ENCODE measurements at regions of chr1 and their contacts with region 1.

Region 1: DNA sequence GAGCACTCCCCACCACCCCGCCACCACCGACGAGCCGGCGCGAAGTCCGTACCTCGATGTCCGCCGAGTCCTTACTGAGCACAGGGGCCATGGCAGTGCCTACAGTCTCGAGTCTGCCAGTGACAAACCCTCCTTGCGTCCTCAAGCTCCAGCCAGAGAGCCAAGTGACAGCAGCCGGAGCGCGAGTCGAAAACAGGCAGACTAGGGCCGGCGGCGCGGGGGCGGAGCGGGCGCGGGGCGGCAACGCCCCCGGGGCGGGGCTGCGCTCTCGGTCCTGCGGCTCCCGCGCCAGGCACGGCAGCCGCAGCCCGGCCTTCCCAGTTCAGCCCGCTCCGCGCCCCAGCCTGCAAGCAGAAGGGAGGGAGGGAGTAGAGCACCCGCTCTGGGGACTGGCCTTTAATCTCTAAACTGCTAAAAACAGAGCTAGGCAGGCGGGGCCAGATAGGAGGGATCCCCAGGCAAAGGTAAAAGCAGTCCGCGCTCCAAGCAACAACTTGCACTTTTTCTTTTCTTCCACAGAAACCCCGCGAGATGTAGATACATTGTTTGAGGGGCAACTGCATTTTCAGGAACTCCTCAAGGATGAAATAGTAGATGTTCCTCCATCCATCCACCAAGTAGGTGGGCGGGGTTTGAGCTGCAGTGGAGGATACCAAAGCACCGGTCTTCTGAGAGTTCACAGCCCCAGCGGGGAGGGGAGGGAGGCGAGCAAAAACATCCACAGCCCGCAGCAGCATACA is at the start of gene DPYD:
- DNase-seq: peak; percentile 88
- ATAC-seq: peak; percentile 90
- H3K4me3 ChIP-seq: peak within 1 kb of the TSS; percentile 84
- H3K27ac ChIP-seq: peak within 1 kb of the TSS; percentile 69
- H3K4me1 ChIP-seq: peaks cover 24% of the 10 kb centered on the region
- H3K27me3 ChIP-seq: no peaks in the 10 kb centered on the region
- CTCF ChIP-seq: no peak
- total RNA-seq, gene DPYD: 11.7 and 12.8 TPM in 2 replicates

Region 2: GRCh38 chr1:97668945-97669344 is 252.1 kb before region 1 on chr1:
- CTCF ChIA-PET with region 1: no interaction called
- POLR2A ChIA-PET with region 1: no interaction called
- intact Hi-C with region 1: loop called (anchors 5 kb)
- DNase-seq: peak; percentile 64
- ATAC-seq: peak; percentile 91
- H3K4me3 ChIP-seq: no peak overlapping the region
- H3K27ac ChIP-seq: no peak overlapping the region
- H3K4me1 ChIP-seq: peaks cover 7% of the 10 kb centered on the region; the same call in 1 of the 2 replicates
- H3K27me3 ChIP-seq: no peaks in the 10 kb centered on the region
- CTCF ChIP-seq: peak; percentile 76

Region 3: DNA sequence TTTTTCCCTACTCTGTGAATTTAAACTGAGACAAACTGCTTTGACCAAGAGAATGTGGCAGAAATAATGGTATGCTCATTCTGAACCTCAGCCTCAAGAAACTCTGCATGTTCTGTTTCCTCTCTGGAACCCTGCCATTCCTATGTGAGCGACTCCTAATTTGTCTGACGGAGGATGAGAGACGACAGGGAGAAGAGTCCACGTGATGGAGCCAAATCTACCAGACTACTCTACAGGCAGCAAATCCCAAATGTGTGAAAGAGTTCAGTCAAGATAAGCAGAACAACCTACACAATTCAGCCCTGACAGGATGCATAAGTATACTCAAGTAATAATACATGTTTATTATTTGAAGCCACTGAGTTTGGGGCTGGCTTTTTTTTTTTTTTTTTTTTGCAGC is 153.6 kb before region 1 on chr1:
- CTCF ChIA-PET with region 1: no interaction called
- POLR2A ChIA-PET with region 1: no interaction called
- intact Hi-C with region 1: no loop called
- DNase-seq: no peak
- ATAC-seq: no peak
- H3K4me3 ChIP-seq: no peak overlapping the region
- H3K27ac ChIP-seq: no peak overlapping the region
- H3K4me1 ChIP-seq: no peaks in the 10 kb centered on the region
- H3K27me3 ChIP-seq: no peaks in the 10 kb centered on the region
- CTCF ChIP-seq: no peak

Region 4: DNA sequence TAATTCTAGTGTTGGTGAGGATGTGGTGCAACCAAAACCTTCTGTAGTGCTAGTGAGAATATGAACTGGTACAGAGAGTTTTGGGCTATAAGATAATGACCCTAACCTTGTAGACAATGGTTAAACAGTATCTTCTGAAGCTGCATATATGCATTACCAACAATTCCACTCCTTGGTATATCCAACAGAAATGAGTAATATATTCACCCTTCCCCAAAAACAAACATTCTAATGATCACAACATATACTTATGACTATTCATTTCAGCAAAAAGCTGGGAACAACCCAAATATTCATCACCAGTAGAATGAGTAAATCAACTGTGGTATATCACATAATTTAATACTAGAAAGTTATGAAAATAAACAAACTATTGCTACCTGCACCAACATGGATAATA is 39.5 kb after region 1 on chr1:
- CTCF ChIA-PET with region 1: no interaction called
- POLR2A ChIA-PET with region 1: no interaction called
- intact Hi-C with region 1: loop called (anchors 2 kb)
- DNase-seq: peak; percentile 27
- ATAC-seq: peak; percentile 79
- H3K4me3 ChIP-seq: no peak overlapping the region
- H3K27ac ChIP-seq: no peak overlapping the region
- H3K4me1 ChIP-seq: peaks cover 4% of the 10 kb centered on the region
- H3K27me3 ChIP-seq: no peaks in the 10 kb centered on the region
- CTCF ChIP-seq: no peak

Region 5: DNA sequence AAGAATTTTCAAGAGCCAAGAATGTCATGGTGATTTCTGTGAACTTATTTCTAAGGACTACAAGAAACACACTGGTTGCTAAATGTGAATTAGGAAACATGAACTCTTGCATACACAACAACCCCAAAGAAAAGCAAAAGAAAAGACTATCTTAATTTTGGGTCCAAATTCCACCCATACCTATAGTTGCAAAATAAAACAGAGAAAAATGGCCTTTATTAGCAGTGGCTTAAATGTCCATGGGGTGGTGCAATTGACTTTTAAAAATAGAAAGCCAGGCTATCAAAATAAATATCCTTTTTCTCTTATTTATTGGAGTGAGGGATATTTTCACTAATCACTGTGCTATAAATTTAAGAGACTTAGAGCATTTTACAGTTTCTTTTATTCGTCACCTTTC is 80.8 kb after region 1 on chr1:
- CTCF ChIA-PET with region 1: no interaction called
- POLR2A ChIA-PET with region 1: no interaction called
- intact Hi-C with region 1: no loop called
- DNase-seq: peak; percentile 60
- ATAC-seq: peak; percentile 26; the same call in 1 of the 2 replicates
- H3K4me3 ChIP-seq: no peak overlapping the region
- H3K27ac ChIP-seq: no peak overlapping the region
- H3K4me1 ChIP-seq: peaks cover 45% of the 10 kb centered on the region
- H3K27me3 ChIP-seq: no peaks in the 10 kb centered on the region
- CTCF ChIP-seq: peak; percentile 75

Region 6: DNA sequence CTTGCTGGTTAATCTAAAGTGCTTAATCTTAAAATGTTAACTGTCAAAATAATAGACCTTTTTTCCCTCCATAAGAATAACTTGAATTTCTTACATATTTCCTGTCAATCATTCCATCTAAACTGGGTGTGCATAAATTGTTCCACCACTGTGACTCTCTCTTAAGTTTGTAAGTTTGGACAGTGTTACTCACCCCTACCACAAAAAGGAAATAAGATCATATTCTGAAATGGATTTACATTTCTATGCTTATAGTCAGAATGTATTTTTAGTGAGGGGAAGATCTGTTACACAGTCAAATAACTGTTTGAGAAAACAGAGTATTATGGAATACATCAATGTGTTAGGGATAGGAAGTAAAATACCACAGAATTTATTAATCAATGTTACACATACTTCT is 109.5 kb after region 1 on chr1:
- CTCF ChIA-PET with region 1: no interaction called
- POLR2A ChIA-PET with region 1: interaction called, 3 read pairs
- intact Hi-C with region 1: loop called (anchors 5 kb)
- DNase-seq: peak; percentile 89
- ATAC-seq: peak; percentile 85
- H3K4me3 ChIP-seq: peak overlapping the region; percentile 71
- H3K27ac ChIP-seq: peak overlapping the region; percentile 87
- H3K4me1 ChIP-seq: peaks cover 60% of the 10 kb centered on the region
- H3K27me3 ChIP-seq: no peaks in the 10 kb centered on the region
- CTCF ChIP-seq: no peak

Region 7: DNA sequence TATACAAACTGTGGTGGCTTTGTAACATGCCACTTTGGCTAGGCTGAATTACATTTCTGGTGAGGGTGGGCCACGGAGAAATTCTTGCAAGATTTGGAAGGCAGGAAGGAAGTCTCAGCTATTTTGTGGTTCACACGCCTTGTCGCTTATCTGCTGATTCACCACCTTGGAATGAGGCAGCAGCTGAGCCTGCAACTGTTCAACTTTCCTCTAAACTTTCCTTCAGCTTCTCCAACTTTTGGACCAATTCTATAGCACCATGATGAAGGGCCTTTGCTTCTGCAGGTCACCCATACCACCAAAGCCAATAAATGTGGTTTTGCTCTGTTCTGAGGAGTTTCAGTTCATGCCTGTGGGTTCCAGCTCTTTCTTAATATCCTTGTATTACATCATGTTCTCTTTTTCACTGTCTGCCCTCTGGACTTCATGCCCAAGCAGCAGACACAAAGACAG is 402.9 kb after region 1 on chr1:
- CTCF ChIA-PET with region 1: no interaction called
- POLR2A ChIA-PET with region 1: no interaction called
- intact Hi-C with region 1: loop called (anchors 10 kb)
- DNase-seq: peak; percentile 98
- ATAC-seq: peak; percentile 68
- H3K4me3 ChIP-seq: peak overlapping the region; percentile 32
- H3K27ac ChIP-seq: peak overlapping the region; percentile 96
- H3K4me1 ChIP-seq: peaks cover 80% of the 10 kb centered on the region
- H3K27me3 ChIP-seq: no peaks in the 10 kb centered on the region
- CTCF ChIP-seq: no peak

Measured in PC-3 (cell line).